Activated CD4-positive, alpha-beta T cell treated with anti-CD3 and anti-CD28 coated beads for 36 hours (primary cell): ENCODE measurements at regions of chr1 and their contacts with region 1.

Region 1: GRCh38 chr1:32357614-32358013 is 4.7 kb downstream of the FAM229A start:
- DNase-seq: no peak
- ATAC-seq: no peak
- H3K4me3 Mint-ChIP-seq: no peak overlapping the region
- H3K27ac Mint-ChIP-seq: no peak overlapping the region
- H3K4me1 Mint-ChIP-seq: peaks cover 18% of the 10 kb centered on the region
- H3K27me3 Mint-ChIP-seq: peaks cover 2% of the 10 kb centered on the region

Region 2: GRCh38 chr1:32200226-32201010 is 157.2 kb before region 1 on chr1 and contains the start of gene CCDC28B:
- CTCF ChIA-PET with region 1: no interaction called
- POLR2A ChIA-PET with region 1: no interaction called
- intact Hi-C with region 1: loop called in 1 of 2 experiments (anchors 5 kb)
- DNase-seq: peak; percentile 77
- ATAC-seq: peak; percentile 53
- H3K4me3 Mint-ChIP-seq: peak within 1 kb of the TSS; percentile 71
- H3K27ac Mint-ChIP-seq: peak within 1 kb of the TSS; percentile 86
- H3K4me1 Mint-ChIP-seq: peaks cover 57% of the 10 kb centered on the region
- H3K27me3 Mint-ChIP-seq: no peaks in the 10 kb centered on the region
- total RNA-seq, gene CCDC28B: 13.0 to 19.3 TPM

Region 3: DNA sequence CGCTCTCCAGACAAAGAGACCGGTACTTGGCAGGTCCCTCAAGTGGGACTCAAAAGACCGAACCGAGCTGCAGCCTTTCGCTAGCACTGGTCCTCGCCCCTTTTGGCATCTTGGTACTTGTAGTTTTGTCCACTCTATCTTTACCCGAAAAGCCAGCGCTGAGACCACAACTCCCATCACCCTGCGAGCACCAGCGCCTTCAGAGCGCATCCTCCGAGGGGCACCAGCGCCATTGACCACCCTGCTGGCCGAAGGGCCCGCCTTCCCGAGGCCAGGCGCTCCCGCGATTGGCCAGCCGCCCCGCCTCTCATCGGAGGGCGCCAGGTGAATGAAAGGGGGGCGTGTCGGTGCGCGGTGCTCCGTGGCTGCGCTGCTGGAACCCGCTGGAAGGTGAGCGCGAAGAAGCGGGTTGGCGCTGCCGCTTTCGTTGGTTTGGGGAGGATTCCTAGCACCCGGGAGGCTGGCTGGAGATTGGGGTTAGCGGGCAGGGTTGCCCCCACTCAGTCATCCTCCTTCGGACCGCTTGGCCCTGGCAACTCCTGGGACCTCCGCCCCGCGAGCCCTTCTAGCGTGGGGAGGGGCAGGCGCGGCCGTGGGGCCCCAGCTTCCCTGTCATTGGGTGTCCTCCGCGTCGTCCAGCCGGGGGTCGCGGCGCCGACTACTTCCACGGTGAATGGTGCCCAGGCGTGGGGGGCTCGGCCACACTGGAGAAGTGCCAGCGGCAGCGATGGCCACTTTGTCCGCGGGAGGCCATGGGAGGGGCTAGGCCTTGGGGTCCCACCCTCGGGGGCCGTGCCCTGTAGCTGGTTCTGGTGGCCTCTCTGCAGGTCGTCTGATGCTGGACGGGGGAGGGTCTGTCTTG is 107.3 kb after region 1 on chr1 and contains the start of gene ZBTB8B:
- CTCF ChIA-PET with region 1: no interaction called
- POLR2A ChIA-PET with region 1: no interaction called
- intact Hi-C with region 1: no loop called
- DNase-seq: peak; percentile 64
- ATAC-seq: peak; percentile 89
- H3K4me3 Mint-ChIP-seq: peak within 1 kb of the TSS; percentile 50
- H3K27ac Mint-ChIP-seq: no peak within 1 kb of the TSS
- H3K4me1 Mint-ChIP-seq: peaks cover 15% of the 10 kb centered on the region
- H3K27me3 Mint-ChIP-seq: peaks cover 40% of the 10 kb centered on the region
- total RNA-seq, gene ZBTB8B: not detected